ENCODE measurements at regions of chr19 and their contacts with region 1.

Region 1: GRCh38 chr19:35716801-35717666 is 769 bp upstream of the KMT2B start:
- DNase-seq: peak; percentile 92 to 94
- H3K4me3 ChIP-seq: peak overlapping the region; percentile 34 to 88 (median 82)
- H3K27ac ChIP-seq: peak overlapping the region; percentile 79
- H3K4me1 ChIP-seq: peaks cover 0 to 25% (median 17%) of the 10 kb centered on the region in 4 experiments; a peak in 6 of 7 replicates
- H3K27me3 ChIP-seq: no peaks in the 10 kb centered on the region
- CTCF ChIP-seq: peak; percentile 58 to 77 (median 67)
- EP300 ChIP-seq: no peak
- POLR2A ChIP-seq: peak in 1 of 2 experiments; percentile 88; a peak in 1 of 3 replicates
- RAD21 ChIP-seq: peak; percentile 69 to 71

Region 2: DNA sequence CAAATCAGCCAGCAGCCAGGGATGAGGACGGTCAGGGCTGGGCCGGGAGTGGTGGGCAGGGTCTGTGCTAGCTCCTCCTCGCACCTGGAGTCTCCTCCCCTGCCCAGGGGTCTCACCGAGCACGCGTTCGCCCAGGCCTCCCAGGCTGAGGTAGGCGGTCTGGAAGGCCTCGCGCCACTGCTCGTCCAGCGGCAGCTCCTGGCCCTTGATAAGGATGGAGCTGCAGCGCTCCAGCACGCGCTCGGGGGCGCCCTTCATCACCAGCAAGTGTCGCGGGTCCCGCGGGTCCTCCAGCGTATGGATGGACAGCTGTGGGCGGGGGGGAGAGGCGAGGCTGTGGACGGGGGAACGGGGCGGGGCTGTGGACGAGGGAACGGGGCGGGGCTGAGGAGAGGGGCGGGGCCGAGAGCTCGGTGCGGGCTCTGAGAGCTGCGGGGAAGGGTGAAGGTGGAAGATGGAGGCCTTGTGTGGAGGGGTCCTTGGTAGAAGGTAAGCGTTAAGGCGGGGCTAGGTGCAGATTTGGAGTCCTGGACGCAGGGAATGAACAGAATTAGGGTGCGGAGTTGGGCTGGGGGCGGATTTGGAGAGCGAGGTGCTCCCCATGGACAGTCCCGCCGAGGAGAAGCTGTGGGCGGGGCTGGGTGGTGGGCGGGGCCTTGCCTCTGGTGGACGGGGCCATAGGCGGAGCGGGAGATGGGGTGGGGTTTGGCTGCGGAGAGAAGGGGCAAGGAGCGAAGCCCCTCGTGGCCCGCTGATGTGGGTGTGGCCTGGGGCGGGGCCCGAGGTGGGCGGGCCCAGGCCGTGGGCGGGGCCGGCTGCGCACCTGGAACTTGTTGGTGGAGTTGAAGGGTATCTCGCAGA is 159.3 kb before region 1 on chr19:
- CTCF ChIA-PET with region 1: interaction called, 14 read pairs
- POLR2A ChIA-PET with region 1: interaction called, 4 read pairs
- DNase-seq: peak; percentile 86 to 99
- H3K4me3 ChIP-seq: peak overlapping the region; percentile 52 to 65 (median 62)
- H3K27ac ChIP-seq: no peak overlapping the region
- H3K4me1 ChIP-seq: peaks cover 0 to 6% (median 4%) of the 10 kb centered on the region in 4 experiments; a peak in 3 of 7 replicates
- H3K27me3 ChIP-seq: peaks cover 0 to 16% (median 12%) of the 10 kb centered on the region in 4 experiments; a peak in 5 of 7 replicates
- CTCF ChIP-seq: peak in 2 of 3 experiments; percentile 4 to 18; a peak in 1 of 4 replicates
- EP300 ChIP-seq: no peak
- POLR2A ChIP-seq: peak in 1 of 2 experiments; percentile 65; a peak in 1 of 3 replicates
- RAD21 ChIP-seq: peak in 1 of 2 experiments; percentile 12; a peak in 2 of 4 replicates

Region 3: DNA sequence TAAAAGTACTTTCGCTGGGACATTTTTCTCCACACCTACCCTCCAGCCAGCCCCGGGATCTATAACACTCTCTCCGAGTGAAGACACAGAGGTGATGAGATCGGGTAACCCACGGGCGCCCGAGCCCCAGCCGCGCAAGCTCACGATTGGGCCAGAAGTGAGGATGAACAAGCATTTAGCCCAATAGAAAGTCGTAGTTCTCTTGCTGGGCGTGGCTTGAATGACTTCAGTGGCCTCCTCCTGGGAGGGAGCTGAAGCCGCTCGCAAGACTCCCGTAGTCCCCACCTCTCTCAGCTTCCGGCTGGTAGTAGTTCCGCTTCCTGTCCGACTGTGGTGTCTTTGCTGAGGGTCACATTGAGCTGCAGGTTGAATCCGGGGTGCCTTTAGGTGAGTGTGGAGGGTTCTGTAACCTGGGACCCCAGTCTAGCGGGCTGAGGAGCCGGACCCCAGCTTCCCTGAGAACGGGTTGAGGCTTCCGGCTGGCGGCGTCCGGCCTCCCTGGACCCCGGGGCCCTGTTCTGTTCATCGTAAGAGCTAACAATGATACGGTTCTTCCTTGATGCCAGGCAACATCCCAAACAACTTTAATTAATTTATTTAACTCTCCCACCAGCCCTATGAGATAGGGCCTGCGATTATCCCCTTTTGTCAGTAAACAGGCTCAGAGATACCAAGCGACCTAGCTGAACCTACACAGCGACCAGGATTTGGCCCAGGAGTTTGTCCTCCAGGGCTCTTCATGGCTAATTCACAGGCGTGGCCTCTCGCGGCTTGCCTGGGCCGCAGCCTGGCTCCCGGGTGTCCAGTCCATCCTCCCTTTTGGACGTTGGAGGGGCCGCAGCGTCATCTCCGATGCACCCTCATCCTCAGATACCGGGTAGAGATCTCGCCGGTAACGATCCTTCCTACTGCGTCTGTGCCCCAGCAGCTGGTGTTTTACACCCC is 68.7 kb before region 1 on chr19 and contains the start of gene COX6B1:
- CTCF ChIA-PET with region 1: interaction called, 6 read pairs
- POLR2A ChIA-PET with region 1: interaction called, 13 read pairs
- DNase-seq: peak; percentile 84 to 88
- H3K4me3 ChIP-seq: peak within 1 kb of the TSS; percentile 62 to 98 (median 92)
- H3K27ac ChIP-seq: peak within 1 kb of the TSS; percentile 44; the same call in 1 of the 2 replicates
- H3K4me1 ChIP-seq: peaks cover 2 to 11% (median 4%) of the 10 kb centered on the region in 4 experiments; a peak in 5 of 7 replicates
- H3K27me3 ChIP-seq: no peaks in the 10 kb centered on the region; a peak in 3 of 7 replicates
- CTCF ChIP-seq: no peak
- EP300 ChIP-seq: no peak
- POLR2A ChIP-seq: peak; percentile 49 to 83
- RAD21 ChIP-seq: no peak
- total RNA-seq, gene COX6B1: 436 and 437 TPM in 2 replicates

Region 4: GRCh38 chr19:35693830-35694599 is 23.0 kb before region 1 on chr19:
- CTCF ChIA-PET with region 1: interaction called, 105 read pairs
- POLR2A ChIA-PET with region 1: interaction called, 13 read pairs
- DNase-seq: peak in 1 of 2 experiments; percentile 93
- H3K4me3 ChIP-seq: no peak overlapping the region
- H3K27ac ChIP-seq: no peak overlapping the region
- H3K4me1 ChIP-seq: no peaks in the 10 kb centered on the region
- H3K27me3 ChIP-seq: no peaks in the 10 kb centered on the region
- CTCF ChIP-seq: peak; percentile 99
- EP300 ChIP-seq: no peak
- POLR2A ChIP-seq: no peak
- RAD21 ChIP-seq: peak; percentile 91 to 97

Region 5: DNA sequence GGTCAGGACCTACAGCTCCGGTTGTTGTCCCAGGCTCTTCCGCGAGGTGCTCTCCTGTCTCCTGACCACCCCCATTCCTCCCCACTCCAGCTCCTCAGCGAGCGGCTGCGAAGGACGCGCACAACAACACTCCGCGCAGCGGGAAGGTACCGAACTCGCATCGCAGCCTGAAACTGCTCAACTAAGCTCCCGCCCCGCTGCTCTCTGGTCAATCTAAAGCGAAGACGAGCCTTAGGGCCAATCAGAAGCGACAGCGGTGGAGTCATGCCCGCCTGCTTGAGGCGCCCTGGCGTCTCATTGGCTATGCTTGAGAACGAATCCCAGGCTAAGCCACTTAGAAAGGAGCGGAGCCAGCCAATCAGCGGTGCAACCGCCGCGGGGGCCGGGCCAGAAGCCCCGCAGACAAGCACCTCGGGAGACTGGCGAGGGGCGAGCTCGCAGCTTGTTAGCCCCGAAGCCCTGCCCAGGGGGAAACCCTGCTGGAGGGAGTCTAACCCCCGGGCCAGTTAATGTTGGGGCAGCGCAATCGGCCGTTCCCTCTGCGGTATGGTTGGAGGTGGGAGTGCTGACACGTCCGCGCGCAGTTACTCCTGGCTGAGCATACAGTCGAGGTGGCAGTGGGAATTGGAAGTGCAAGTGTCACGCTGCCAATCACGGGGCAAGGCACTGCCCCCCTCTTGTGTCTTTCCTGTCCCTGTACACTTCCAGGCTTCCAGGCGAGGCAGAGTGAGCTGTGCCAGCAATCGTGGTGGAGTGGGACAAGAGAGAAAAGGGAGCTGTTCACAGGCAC is 14.6 kb before region 1 on chr19:
- CTCF ChIA-PET with region 1: interaction called, 105 read pairs
- POLR2A ChIA-PET with region 1: interaction called, 28 read pairs
- DNase-seq: peak; percentile 91 to 96
- H3K4me3 ChIP-seq: peak overlapping the region; percentile 48 to 66 (median 56)
- H3K27ac ChIP-seq: no peak overlapping the region; the same call in 1 of the 2 replicates
- H3K4me1 ChIP-seq: peaks cover 0 to 4% (median 3%) of the 10 kb centered on the region in 4 experiments; a peak in 4 of 7 replicates
- H3K27me3 ChIP-seq: peaks cover 2 to 11% (median 11%) of the 10 kb centered on the region in 4 experiments; a peak in 6 of 7 replicates
- CTCF ChIP-seq: no peak
- EP300 ChIP-seq: no peak
- POLR2A ChIP-seq: peak in 1 of 2 experiments; percentile 44; a peak in 1 of 3 replicates
- RAD21 ChIP-seq: no peak

Region 6: GRCh38 chr19:35731358-35731757 is 14.3 kb after region 1 on chr19:
- CTCF ChIA-PET with region 1: interaction called, 80 read pairs
- POLR2A ChIA-PET with region 1: interaction called, 54 read pairs
- DNase-seq: no peak
- H3K4me3 ChIP-seq: no peak overlapping the region
- H3K27ac ChIP-seq: no peak overlapping the region
- H3K4me1 ChIP-seq: no peaks in the 10 kb centered on the region
- H3K27me3 ChIP-seq: no peaks in the 10 kb centered on the region
- CTCF ChIP-seq: no peak
- EP300 ChIP-seq: no peak
- POLR2A ChIP-seq: no peak
- RAD21 ChIP-seq: no peak

Region 7: DNA sequence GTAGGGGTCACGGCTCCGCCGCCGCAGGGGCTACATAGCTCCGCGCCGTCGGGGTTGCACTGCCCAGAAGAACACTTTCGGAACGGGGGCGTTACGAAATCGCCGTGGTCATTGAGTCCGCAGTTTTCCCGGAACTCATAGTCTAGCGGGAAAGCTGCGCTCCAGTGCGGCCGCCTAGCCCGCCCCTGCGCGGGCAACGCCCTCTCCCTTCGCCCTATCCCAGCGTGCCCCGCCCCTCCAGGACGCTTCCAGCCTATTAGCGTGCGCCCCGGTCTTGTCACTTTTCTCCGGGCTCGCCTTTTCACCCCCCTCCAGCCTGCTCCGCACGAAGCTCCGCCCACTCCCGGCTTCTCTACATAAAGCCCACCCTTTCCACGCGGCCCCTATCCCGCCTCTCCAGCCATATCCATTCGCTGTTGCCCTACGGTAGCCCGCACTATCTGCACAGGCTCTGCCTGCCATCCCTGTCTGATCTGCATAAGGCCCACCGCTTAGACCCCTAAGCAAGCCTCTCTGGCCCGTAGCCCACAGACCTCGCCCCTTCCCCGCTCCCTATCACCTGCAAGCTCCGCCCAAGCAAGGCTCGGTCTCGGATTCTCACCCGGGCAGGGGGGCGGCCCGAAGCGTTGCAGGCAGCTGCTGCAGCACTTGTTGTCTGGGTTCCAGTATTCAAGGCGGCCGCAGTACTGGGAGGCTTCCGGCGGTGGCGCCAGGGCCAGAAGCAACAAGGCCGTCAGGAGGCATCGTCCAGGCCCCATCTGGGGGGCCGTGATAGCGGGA is 23.6 kb after region 1 on chr19:
- CTCF ChIA-PET with region 1: interaction called, 80 read pairs
- POLR2A ChIA-PET with region 1: interaction called, 54 read pairs
- DNase-seq: peak; percentile 93 to 96
- H3K4me3 ChIP-seq: peak overlapping the region; percentile 72 to 86 (median 78)
- H3K27ac ChIP-seq: peak overlapping the region; percentile 69; the same call in 1 of the 2 replicates
- H3K4me1 ChIP-seq: peaks cover 0 to 6% (median 3%) of the 10 kb centered on the region in 4 experiments; a peak in 3 of 7 replicates
- H3K27me3 ChIP-seq: no peaks in the 10 kb centered on the region
- CTCF ChIP-seq: peak; percentile 14 to 40 (median 31)
- EP300 ChIP-seq: peak in 1 of 2 experiments; percentile 43; a peak in 1 of 3 replicates
- POLR2A ChIP-seq: no peak; a peak in 2 of 3 replicates
- RAD21 ChIP-seq: peak in 1 of 2 experiments; percentile 24; a peak in 2 of 4 replicates